Cardiac septum (tissue), 1 donor: ENCODE measurements at regions of chr17 and their contacts with region 1.

Region 1: GRCh38 chr17:20226814-20227482 is 217.8 kb downstream of the SPECC1 start:
- DNase-seq: peak; percentile 86

Region 2: GRCh38 chr17:19992803-19993713 is 233.9 kb before region 1 on chr17:
- intact Hi-C with region 1: loop called (anchors 10 kb)
- DNase-seq: peak; percentile 89

Region 3: GRCh38 chr17:20315821-20316220 is 88.9 kb after region 1 on chr17:
- intact Hi-C with region 1: loop called (anchors 5 kb)
- DNase-seq: no peak